PC-3 (cell line): ENCODE measurements at regions of chr12 and their contacts with region 1.

Region 1: GRCh38 chr12:6688999-6689882 is at the start of gene ZNF384:
- DNase-seq: peak; percentile 97
- ATAC-seq: peak; percentile 85
- H3K4me3 ChIP-seq: peak within 1 kb of the TSS; percentile 72
- H3K27ac ChIP-seq: peak within 1 kb of the TSS; percentile 83
- H3K4me1 ChIP-seq: peaks cover 13% of the 10 kb centered on the region; the same call in 1 of the 2 replicates
- H3K27me3 ChIP-seq: no peaks in the 10 kb centered on the region
- CTCF ChIP-seq: no peak
- total RNA-seq, gene ZNF384: 19.6 and 22.3 TPM in 2 replicates

Region 2: GRCh38 chr12:6605421-6606292 is 83.6 kb before region 1 on chr12:
- CTCF ChIA-PET with region 1: interaction called, 12 read pairs
- POLR2A ChIA-PET with region 1: no interaction called
- intact Hi-C with region 1: no loop called
- DNase-seq: peak; percentile 51
- ATAC-seq: peak; percentile 33
- H3K4me3 ChIP-seq: peak overlapping the region; percentile 94
- H3K27ac ChIP-seq: peak overlapping the region; percentile 40
- H3K4me1 ChIP-seq: peaks cover 27% of the 10 kb centered on the region
- H3K27me3 ChIP-seq: no peaks in the 10 kb centered on the region
- CTCF ChIP-seq: no peak

Region 3: DNA sequence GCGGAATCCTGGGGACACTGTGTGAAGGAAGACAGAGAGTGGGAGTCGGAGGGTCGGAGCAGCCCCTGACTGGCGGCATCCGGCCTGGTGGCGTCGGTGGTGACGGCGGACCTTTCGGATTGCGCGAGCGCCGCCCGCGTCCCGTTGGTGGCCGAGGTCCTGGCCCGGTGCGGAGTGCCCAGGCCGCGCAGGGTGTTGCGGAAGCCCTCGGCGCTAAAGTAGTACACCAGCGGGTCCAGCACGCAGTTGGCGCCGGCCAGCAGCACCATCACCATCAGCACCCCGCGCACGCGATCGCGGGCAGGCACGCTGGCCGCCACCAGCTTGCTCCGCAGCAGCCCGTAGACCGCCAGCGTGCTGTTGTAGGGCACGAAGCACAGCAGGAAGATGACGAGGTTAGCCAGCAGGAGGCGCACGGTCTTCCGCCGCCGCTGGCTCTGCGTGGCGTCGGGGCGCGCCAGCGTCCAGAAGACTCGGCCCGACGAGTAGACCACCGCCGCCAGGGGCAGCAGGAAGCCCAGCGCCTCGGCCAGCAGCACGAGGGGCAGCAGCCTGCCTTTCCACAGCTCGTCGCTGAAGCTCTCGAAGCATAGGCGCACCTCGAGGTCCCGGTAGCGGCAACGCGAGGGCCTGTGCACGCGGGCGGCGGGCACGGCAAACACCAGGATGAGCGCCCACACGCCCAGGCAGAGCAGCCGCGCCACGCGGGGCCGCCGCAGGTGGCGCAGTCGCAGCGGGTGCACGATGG is 68.9 kb before region 1 on chr12:
- CTCF ChIA-PET with region 1: no interaction called
- POLR2A ChIA-PET with region 1: no interaction called
- intact Hi-C with region 1: no loop called
- DNase-seq: no peak
- ATAC-seq: no peak
- H3K4me3 ChIP-seq: no peak overlapping the region
- H3K27ac ChIP-seq: no peak overlapping the region
- H3K4me1 ChIP-seq: no peaks in the 10 kb centered on the region
- H3K27me3 ChIP-seq: no peaks in the 10 kb centered on the region
- CTCF ChIP-seq: no peak

Region 4: DNA sequence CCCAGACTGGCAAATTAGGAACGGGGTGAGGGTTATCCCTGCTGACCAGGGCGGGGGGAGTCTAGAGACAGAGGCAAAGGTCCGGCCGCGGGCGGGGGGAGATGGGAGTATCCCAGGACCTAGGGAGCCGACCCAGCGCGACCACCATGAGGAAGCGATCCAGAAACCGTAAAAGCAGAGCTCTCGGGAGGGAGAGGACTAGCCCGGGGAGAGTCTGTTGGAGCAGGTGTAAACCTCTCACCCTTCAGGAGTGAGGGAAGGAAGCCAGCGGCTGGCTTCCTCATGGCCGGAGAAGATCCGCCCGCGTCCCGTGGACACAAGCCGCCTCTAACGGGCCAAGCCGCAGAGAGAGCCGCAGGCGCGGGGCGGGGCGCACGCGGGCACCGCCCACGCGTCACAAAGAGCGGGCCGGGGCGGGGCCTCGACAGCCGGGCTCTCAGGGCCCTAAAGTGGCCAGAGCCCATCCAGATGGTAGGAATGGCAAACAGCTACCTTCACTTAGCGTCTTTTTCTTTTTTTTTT is 42.1 kb before region 1 on chr12 and contains the start of gene ACRBP:
- CTCF ChIA-PET with region 1: no interaction called
- POLR2A ChIA-PET with region 1: no interaction called
- intact Hi-C with region 1: no loop called
- DNase-seq: no peak
- ATAC-seq: no peak
- H3K4me3 ChIP-seq: no peak within 1 kb of the TSS
- H3K27ac ChIP-seq: no peak within 1 kb of the TSS
- H3K4me1 ChIP-seq: no peaks in the 10 kb centered on the region
- H3K27me3 ChIP-seq: no peaks in the 10 kb centered on the region
- CTCF ChIP-seq: no peak
- total RNA-seq, gene ACRBP: 0.77 TPM in 1 of 2 replicates, not detected in the other

Region 5: GRCh38 chr12:6662906-6663742 is 26.1 kb before region 1 on chr12 and contains the start of gene ING4:
- CTCF ChIA-PET with region 1: interaction called, 8 read pairs
- POLR2A ChIA-PET with region 1: interaction called, 9 read pairs
- intact Hi-C with region 1: loop called (anchors 1 kb)
- DNase-seq: peak; percentile 97
- ATAC-seq: peak; percentile 99
- H3K4me3 ChIP-seq: peak within 1 kb of the TSS; percentile 75
- H3K27ac ChIP-seq: peak within 1 kb of the TSS; percentile 45
- H3K4me1 ChIP-seq: peaks cover 8% of the 10 kb centered on the region; the same call in 1 of the 2 replicates
- H3K27me3 ChIP-seq: no peaks in the 10 kb centered on the region
- CTCF ChIP-seq: no peak
- total RNA-seq, gene ING4: 17.0 and 23.8 TPM in 2 replicates

Region 6: DNA sequence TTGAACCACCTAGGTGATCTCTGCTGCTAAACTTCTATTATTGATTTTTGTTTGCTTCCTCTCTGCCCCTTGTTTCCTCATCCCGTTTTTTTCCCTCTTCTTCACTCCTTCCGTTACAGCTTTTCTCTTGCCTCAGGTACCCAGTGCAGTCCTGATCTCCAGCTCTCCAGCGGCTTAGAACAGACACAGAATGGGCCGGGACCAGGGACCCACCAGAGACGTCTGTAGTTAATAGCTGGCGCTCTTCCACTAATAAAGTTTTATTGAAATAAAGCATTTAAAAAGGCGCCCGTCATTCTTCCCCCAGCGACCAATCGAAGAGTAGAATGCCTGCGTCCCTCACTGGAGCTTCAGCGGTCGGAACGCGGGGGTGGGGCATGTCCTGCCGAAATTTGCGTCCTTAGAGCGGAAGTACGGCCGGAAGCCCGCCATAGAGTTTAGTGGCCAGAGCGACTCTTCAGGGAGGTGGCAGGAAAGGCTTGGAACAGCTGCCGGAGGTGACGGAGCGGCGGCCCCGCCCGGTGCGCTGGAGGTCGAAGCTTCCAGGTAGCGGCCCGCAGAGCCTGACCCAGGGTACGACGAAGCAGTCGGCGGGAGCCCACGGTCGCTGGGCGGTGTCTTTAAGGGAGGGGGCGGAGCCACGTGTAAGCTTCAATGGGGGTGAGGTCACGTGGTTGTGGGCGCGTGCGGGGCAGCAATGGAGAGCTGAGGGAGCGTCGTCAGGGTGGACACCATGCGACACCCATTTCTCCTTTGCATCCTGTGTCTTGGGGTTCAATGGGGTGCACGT is 34.6 kb after region 1 on chr12 and contains the start of gene COPS7A:
- CTCF ChIA-PET with region 1: no interaction called
- POLR2A ChIA-PET with region 1: interaction called, 13 read pairs
- intact Hi-C with region 1: loop called (anchors 1 kb)
- DNase-seq: peak; percentile 96
- ATAC-seq: peak; percentile 96
- H3K4me3 ChIP-seq: peak within 1 kb of the TSS; percentile 85
- H3K27ac ChIP-seq: peak within 1 kb of the TSS; percentile 64
- H3K4me1 ChIP-seq: peaks cover 17% of the 10 kb centered on the region
- H3K27me3 ChIP-seq: no peaks in the 10 kb centered on the region
- CTCF ChIP-seq: no peak
- total RNA-seq, gene COPS7A: 82.3 and 86.9 TPM in 2 replicates

Region 7: DNA sequence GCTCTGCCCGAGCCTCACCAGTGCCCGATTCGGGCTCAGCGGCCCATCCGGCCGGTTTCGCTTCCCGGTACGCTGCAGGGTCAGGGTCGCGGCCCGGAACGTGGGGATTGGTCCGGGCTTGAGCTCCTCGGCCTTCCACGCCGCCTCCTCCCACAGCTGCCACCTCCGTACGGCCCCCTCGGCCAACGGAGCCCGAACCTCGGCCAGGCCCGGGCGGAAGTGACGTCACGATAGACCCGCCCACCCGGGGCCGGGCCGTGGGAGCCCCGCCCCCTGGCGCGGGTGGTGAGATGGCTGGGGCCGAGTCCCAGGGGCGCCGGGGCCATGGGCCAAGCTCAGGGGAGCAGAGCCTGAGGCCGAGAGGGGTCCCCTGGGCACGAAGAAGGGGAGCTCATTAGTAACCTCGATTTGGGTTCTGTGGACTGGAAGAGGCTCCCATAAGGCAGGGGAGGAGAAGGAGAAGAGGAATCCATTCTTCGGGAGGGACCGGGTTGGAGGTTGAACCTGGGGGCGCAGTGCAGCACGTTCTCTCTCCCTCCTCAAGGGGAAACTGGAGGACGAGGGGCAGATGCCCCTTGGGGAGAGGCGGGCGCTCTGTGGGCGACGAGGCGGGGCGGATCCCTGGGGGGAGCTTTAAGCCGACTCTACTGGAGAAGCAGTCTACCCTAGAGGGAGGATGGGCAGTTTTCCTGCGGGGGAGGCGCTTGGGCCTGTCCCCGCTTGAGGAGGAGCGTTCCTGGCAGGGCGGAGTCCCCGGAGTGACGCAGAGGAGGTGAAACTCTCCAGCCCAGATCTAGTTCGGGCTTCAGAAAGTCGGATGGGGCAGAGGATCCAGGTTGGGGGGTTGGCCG is 63.9 kb after region 1 on chr12 and contains the start of gene MLF2:
- CTCF ChIA-PET with region 1: no interaction called
- POLR2A ChIA-PET with region 1: interaction called, 10 read pairs
- intact Hi-C with region 1: no loop called
- DNase-seq: peak; percentile 95
- ATAC-seq: peak; percentile 92
- H3K4me3 ChIP-seq: peak within 1 kb of the TSS; percentile 91
- H3K27ac ChIP-seq: peak within 1 kb of the TSS; percentile 89
- H3K4me1 ChIP-seq: peaks cover 12% of the 10 kb centered on the region
- H3K27me3 ChIP-seq: no peaks in the 10 kb centered on the region
- CTCF ChIP-seq: peak; percentile 88; the same call in 1 of the 2 replicates
- total RNA-seq, gene MLF2: 222 and 248 TPM in 2 replicates

Region 8: GRCh38 chr12:6778574-6779550 is 89.6 kb after region 1 on chr12:
- CTCF ChIA-PET with region 1: no interaction called
- POLR2A ChIA-PET with region 1: interaction called, 16 read pairs
- intact Hi-C with region 1: no loop called
- DNase-seq: peak; percentile 91
- ATAC-seq: peak; percentile 95
- H3K4me3 ChIP-seq: peak overlapping the region; percentile 68
- H3K27ac ChIP-seq: no peak overlapping the region
- H3K4me1 ChIP-seq: peaks cover 4% of the 10 kb centered on the region; the same call in 1 of the 2 replicates
- H3K27me3 ChIP-seq: no peaks in the 10 kb centered on the region
- CTCF ChIP-seq: peak; percentile 87

Region 9: DNA sequence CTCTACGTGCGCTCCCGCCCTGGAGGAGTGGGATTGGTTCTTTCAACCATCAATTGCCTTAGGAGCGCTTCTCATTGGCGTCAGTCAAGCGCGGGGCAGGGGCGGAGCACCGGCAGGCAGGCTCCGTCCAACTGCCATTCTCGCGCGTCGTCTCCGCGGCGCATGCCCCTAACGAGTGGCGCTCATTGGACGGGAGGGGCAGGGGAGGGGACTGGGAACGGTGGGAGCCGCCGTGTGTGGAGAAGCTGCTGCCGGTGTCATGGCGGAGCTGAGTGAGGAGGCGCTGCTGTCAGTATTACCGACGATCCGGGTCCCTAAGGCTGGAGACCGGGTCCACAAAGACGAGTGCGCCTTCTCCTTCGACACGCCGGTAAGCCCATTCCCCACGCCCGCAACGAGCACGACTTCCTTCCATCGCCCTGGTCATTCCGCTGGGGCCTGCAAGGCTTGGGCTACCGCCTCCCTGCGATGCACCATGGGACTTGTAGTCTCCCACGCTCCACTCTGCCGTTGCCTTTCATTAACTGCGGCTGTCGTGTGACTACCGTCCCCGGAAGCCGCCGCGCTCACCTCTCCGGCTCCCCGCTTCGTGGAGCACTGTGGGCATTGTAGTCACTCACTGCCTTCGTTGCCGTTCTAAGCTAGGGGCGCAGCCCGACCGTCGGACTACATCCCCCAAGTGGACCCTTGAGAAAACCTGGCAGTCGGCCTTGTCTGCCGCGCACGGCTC is 162.8 kb after region 1 on chr12 and contains the start of gene USP5:
- CTCF ChIA-PET with region 1: no interaction called
- POLR2A ChIA-PET with region 1: interaction called, 13 read pairs
- intact Hi-C with region 1: no loop called
- DNase-seq: peak; percentile 98
- ATAC-seq: peak; percentile 77
- H3K4me3 ChIP-seq: peak within 1 kb of the TSS; percentile 86
- H3K27ac ChIP-seq: peak within 1 kb of the TSS; percentile 61
- H3K4me1 ChIP-seq: peaks cover 23% of the 10 kb centered on the region
- H3K27me3 ChIP-seq: no peaks in the 10 kb centered on the region
- CTCF ChIP-seq: no peak
- total RNA-seq, gene USP5: 107 and 113 TPM in 2 replicates

Region 10: GRCh38 chr12:7395950-7396349 is 706.7 kb after region 1 on chr12:
- CTCF ChIA-PET with region 1: no interaction called
- POLR2A ChIA-PET with region 1: no interaction called
- intact Hi-C with region 1: no loop called
- DNase-seq: no peak
- ATAC-seq: no peak
- H3K4me3 ChIP-seq: no peak overlapping the region
- H3K27ac ChIP-seq: no peak overlapping the region
- H3K4me1 ChIP-seq: no peaks in the 10 kb centered on the region
- H3K27me3 ChIP-seq: no peaks in the 10 kb centered on the region
- CTCF ChIP-seq: no peak